Activated T-helper 2 cell treated with anti-CD3 and anti-CD28 coated beads, Interferon-gamma antibody, Interleukin-2, Interleukin-4, amounts not matched to agents 10 μg/mL and 5 μg/mL and 100 μg/mL, durations not matched to agents 14 hours and 24 hours and 36 hours (primary cell): ENCODE measurements at regions of chr4 and their contacts with region 1.

Region 1: DNA sequence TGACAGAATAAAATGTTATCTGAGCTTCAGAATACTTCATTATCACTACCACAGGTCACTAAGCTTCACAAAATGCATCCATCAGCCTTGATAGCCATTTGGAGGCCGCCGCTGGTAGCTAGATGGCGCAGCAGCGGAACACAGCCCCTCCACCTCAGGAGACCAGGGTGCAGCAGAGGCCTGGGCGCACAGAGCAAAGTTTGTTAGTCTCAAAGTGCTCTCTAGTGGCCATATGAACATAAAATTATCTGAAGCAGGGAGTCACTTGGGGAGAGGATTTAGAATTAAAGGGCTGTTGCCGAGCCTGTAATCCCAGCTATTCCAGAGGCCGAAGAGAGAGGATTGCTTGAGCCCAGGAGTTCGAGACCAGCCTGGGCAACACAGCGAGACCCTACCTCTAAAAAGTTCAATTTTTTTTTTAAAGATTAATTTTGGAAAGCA is 8.1 kb upstream of the DCTD start:
- DNase-seq: peak; percentile 53
- H3K4me3 Mint-ChIP-seq: no peak overlapping the region
- H3K27ac Mint-ChIP-seq: no peak overlapping the region
- H3K4me1 Mint-ChIP-seq: no peaks in the 10 kb centered on the region
- H3K27me3 Mint-ChIP-seq: peaks cover 21% of the 10 kb centered on the region

Region 2: GRCh38 chr4:181143250-181143854 is 1782.0 kb before region 1 on chr4:
- intact Hi-C with region 1: loop called (anchors 5 kb)
- DNase-seq: peak; percentile 29
- H3K4me3 Mint-ChIP-seq: no peak overlapping the region
- H3K27ac Mint-ChIP-seq: no peak overlapping the region
- H3K4me1 Mint-ChIP-seq: no peaks in the 10 kb centered on the region
- H3K27me3 Mint-ChIP-seq: no peaks in the 10 kb centered on the region

Region 3: DNA sequence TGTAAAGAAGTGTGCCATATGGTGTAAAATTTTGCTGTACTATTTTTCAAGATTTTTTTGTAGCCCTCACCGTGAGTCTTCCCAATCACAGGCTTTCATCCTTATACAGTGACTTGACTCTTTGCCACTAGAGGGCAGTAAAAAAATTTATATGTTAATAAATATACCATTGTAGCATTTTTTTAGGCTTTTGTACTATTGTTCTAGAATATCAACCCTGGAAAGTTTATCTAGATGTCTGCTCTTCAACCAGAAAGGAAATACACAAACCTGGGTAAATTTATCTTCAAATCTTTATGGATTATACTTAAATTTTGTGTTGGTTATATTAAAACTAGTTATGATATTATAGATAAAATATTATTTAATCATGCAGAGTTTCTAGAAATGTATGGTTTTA is 446.8 kb before region 1 on chr4:
- intact Hi-C with region 1: loop called (anchors 1 kb)
- DNase-seq: no peak
- H3K4me3 Mint-ChIP-seq: no peak overlapping the region
- H3K27ac Mint-ChIP-seq: no peak overlapping the region
- H3K4me1 Mint-ChIP-seq: no peaks in the 10 kb centered on the region
- H3K27me3 Mint-ChIP-seq: peaks cover 2% of the 10 kb centered on the region